ENCODE measurements at regions of chr5 and their contacts with region 1.

Region 1: GRCh38 chr5:86968301-86968753 is 299.4 kb upstream of the RASA1 start:
- DNase-seq: peak; percentile 65
- ATAC-seq: peak; percentile 71
- H3K4me3 ChIP-seq: no peak overlapping the region
- H3K27ac ChIP-seq: no peak overlapping the region
- H3K4me1 ChIP-seq: no peaks in the 10 kb centered on the region
- H3K27me3 ChIP-seq: no peaks in the 10 kb centered on the region
- CTCF ChIP-seq: peak; percentile 65
- POLR2A ChIP-seq: no peak
- RAD21 ChIP-seq: peak; percentile 70

Region 2: DNA sequence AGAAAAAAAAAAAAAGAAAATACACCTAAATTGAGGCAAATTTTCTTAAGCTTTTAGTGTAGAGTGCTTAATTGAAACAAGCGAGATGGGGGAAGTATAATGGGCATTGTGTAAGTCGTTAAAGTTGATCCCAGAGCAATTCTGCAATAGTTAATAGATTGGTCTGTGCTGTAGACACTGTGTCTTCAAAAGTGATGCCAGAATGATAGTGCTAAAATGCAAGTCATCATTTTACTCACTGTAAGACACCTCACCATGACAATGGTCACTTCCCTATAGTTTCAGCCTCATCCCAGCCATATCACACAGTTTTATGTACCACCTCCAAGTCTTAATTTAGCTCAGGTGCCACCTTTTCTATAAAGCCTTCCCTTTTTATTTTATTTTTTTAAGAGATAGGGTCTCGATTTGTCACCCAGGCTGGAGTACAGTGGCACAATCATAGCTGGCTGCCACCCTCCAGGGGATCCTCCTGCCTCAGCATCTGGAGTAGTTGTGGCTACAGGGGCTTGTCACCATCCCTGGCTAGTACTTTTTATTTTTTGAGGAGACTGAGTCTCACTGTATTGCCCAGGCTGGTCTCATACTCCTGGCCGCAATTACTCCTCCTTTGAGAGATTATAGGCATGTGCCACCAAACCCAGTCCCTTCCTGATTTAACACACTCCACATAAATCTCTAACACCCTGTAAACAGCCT is 344.4 kb before region 1 on chr5:
- CTCF ChIA-PET with region 1: no interaction called
- POLR2A ChIA-PET with region 1: no interaction called
- dilution Hi-C with region 1: no loop called
- in situ Hi-C with region 1: no loop called
- intact Hi-C with region 1: loop called (anchors 10 kb)
- DNase-seq: no peak
- ATAC-seq: no peak
- H3K4me3 ChIP-seq: no peak overlapping the region
- H3K27ac ChIP-seq: no peak overlapping the region
- H3K4me1 ChIP-seq: no peaks in the 10 kb centered on the region
- H3K27me3 ChIP-seq: no peaks in the 10 kb centered on the region
- CTCF ChIP-seq: no peak
- POLR2A ChIP-seq: no peak
- RAD21 ChIP-seq: no peak

Region 3: GRCh38 chr5:87008751-87009560 is 40.6 kb after region 1 on chr5:
- CTCF ChIA-PET with region 1: no interaction called
- POLR2A ChIA-PET with region 1: no interaction called
- dilution Hi-C with region 1: no loop called
- in situ Hi-C with region 1: no loop called
- intact Hi-C with region 1: loop called (anchors 1 kb)
- DNase-seq: peak; percentile 24
- ATAC-seq: peak; percentile 65
- H3K4me3 ChIP-seq: no peak overlapping the region
- H3K27ac ChIP-seq: no peak overlapping the region
- H3K4me1 ChIP-seq: peaks cover 2% of the 10 kb centered on the region; the same call in 1 of the 2 replicates
- H3K27me3 ChIP-seq: no peaks in the 10 kb centered on the region
- CTCF ChIP-seq: no peak
- POLR2A ChIP-seq: no peak
- RAD21 ChIP-seq: no peak

Measured in IMR-90 (cell line).